Naive thymus-derived CD4-positive, alpha-beta T cell (primary cell): ENCODE measurements at regions of chr17 and their contacts with region 1.

Region 1: GRCh38 chr17:66715745-66716156 is 119.2 kb upstream of the CACNG5 start:
- DNase-seq: peak in 7 of 9 donors; percentile 13 to 51 (median 41)
- ATAC-seq: peak; percentile 62
- H3K4me3 ChIP-seq: no peak overlapping the region
- H3K4me3 Mint-ChIP-seq: no peak overlapping the region
- H3K27ac ChIP-seq: no peak overlapping the region
- H3K27ac Mint-ChIP-seq: peak overlapping the region in 3 of 9 donors; percentile 46 to 83 (median 65)
- H3K4me1 ChIP-seq: peaks cover 10 to 29% of the 10 kb centered on the region in 2 donors
- H3K4me1 Mint-ChIP-seq: peaks cover 12 to 49% (median 33%) of the 10 kb centered on the region in 7 donors
- H3K27me3 ChIP-seq: no peaks in the 10 kb centered on the region
- H3K27me3 Mint-ChIP-seq: no peaks in the 10 kb centered on the region

Region 2: DNA sequence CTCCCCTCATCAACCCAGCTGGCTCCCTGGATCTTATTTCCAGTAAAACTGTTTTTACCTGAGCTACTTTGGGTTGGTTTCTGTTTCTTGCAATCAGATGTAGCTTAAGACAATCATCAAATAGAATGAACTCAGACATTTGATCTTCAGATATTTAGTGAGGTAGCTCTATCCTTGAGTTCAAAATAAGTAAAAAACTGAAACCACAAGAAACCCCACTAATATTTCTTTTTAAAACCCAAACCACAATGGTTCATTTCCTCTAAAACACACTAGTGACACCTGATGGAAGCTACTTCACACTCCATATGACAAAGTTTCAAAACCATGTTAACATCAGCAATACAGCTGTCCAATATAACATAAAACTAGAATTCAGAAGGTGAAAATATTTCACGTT is 366.4 kb after region 1 on chr17:
- CTCF ChIA-PET with region 1: interaction called, 3 read pairs
- POLR2A ChIA-PET with region 1: no interaction called
- intact Hi-C with region 1: loop called (anchors 5 to 10 kb)
- DNase-seq: peak in 6 of 9 donors; percentile 38 to 70 (median 60)
- ATAC-seq: peak; percentile 79
- H3K4me3 ChIP-seq: no peak overlapping the region
- H3K4me3 Mint-ChIP-seq: peak overlapping the region in 7 of 10 donors; percentile 7 to 57 (median 39)
- H3K27ac ChIP-seq: peak overlapping the region; percentile 12
- H3K27ac Mint-ChIP-seq: peak overlapping the region; percentile 53 to 83 (median 68)
- H3K4me1 ChIP-seq: peaks cover 9 to 19% of the 10 kb centered on the region in 2 donors
- H3K4me1 Mint-ChIP-seq: peaks cover 14 to 37% (median 24%) of the 10 kb centered on the region in 7 donors
- H3K27me3 ChIP-seq: no peaks in the 10 kb centered on the region
- H3K27me3 Mint-ChIP-seq: no peaks in the 10 kb centered on the region

Region 3: GRCh38 chr17:67293251-67294203 is 577.8 kb after region 1 on chr17:
- CTCF ChIA-PET with region 1: no interaction called
- POLR2A ChIA-PET with region 1: no interaction called
- intact Hi-C with region 1: loop called in 1 of 2 experiments (anchors 5 kb)
- DNase-seq: peak; percentile 26 to 67 (median 61)
- ATAC-seq: peak; percentile 97
- H3K4me3 ChIP-seq: no peak overlapping the region
- H3K4me3 Mint-ChIP-seq: peak overlapping the region in 9 of 10 donors; percentile 14 to 68 (median 58)
- H3K27ac ChIP-seq: no peak overlapping the region
- H3K27ac Mint-ChIP-seq: peak overlapping the region in 1 of 9 donors; percentile 55
- H3K4me1 ChIP-seq: peaks cover 0 to 4% of the 10 kb centered on the region in 2 donors
- H3K4me1 Mint-ChIP-seq: peaks cover 0 to 5% (median 0%) of the 10 kb centered on the region in 7 donors
- H3K27me3 ChIP-seq: no peaks in the 10 kb centered on the region
- H3K27me3 Mint-ChIP-seq: no peaks in the 10 kb centered on the region